A673 (cell line): ENCODE measurements at regions of chr17 and their contacts with region 1.

Region 1: GRCh38 chr17:73304971-73305812 is 6.6 kb downstream of the CDC42EP4 start:
- DNase-seq: peak; percentile 94
- H3K4me3 ChIP-seq: peak overlapping the region; percentile 38
- H3K27ac ChIP-seq: peak overlapping the region; percentile 91
- H3K4me1 ChIP-seq: peaks cover 72% of the 10 kb centered on the region
- H3K27me3 ChIP-seq: no peaks in the 10 kb centered on the region
- CTCF ChIP-seq: peak; percentile 58

Region 2: DNA sequence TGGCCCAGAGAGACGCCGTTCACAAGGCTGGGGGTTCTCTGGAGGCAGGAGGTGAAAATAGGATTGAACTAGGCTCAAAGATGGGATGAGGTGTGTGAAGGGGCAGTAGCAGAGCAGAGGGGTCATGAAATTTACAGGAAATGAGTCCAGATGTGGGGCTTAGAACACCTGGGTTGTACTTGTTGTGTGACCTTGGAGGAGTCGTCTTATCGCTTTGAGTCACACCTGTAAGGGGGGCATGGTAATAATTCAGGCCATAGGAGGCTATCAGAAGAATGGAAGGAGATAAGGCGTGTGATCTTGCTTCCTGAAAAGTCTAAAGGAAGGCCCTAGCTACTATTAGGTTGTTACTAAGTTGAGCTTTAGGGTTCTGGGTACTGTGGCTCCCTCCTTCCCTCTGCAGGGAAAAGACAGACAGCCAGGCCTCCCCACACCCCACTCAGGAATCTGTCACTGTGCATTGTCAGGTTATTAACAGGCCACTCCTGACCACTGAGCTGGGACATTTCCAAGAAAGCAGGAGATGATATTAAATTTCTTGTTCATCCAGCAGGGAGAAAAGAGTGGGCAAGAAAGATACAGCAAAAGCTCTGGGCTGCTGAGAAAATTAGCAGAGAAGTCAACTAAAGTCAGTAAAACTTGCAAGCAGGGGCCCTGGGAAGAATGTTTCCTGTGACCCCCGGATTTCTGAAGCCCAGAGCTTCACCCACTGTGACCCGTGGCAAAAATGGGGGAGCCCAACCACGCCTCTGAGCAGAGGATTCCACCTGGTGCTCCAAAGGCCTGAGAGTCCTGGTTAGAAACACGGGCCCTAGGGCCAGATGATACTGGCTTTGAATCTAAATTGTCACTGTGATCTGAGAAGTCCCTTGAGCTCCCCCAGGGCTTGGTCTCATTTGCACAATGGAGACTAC is 12.6 kb after region 1 on chr17:
- CTCF ChIA-PET with region 1: no interaction called
- POLR2A ChIA-PET with region 1: interaction called, 10 read pairs
- intact Hi-C with region 1: no loop called
- DNase-seq: no peak
- H3K4me3 ChIP-seq: no peak overlapping the region
- H3K27ac ChIP-seq: no peak overlapping the region
- H3K4me1 ChIP-seq: no peaks in the 10 kb centered on the region
- H3K27me3 ChIP-seq: no peaks in the 10 kb centered on the region
- CTCF ChIP-seq: no peak

Region 3: GRCh38 chr17:73325527-73325842 is 20.3 kb after region 1 on chr17:
- CTCF ChIA-PET with region 1: no interaction called
- POLR2A ChIA-PET with region 1: interaction called, 23 read pairs
- intact Hi-C with region 1: no loop called
- DNase-seq: no peak
- H3K4me3 ChIP-seq: no peak overlapping the region
- H3K27ac ChIP-seq: no peak overlapping the region
- H3K4me1 ChIP-seq: no peaks in the 10 kb centered on the region
- H3K27me3 ChIP-seq: no peaks in the 10 kb centered on the region
- CTCF ChIP-seq: no peak